Colonic mucosa (tissue), 4 donors: ENCODE measurements at regions of chr17 and their contacts with region 1.

Region 1: GRCh38 chr17:39485555-39485954 is 24.3 kb downstream of the CDK12 start:
- DNase-seq: no peak
- H3K4me3 ChIP-seq: no peak overlapping the region
- H3K27ac ChIP-seq: no peak overlapping the region
- H3K4me1 ChIP-seq: no peaks in the 10 kb centered on the region
- H3K27me3 ChIP-seq: no peaks in the 10 kb centered on the region
- CTCF ChIP-seq: no peak

Region 2: GRCh38 chr17:39306509-39307212 is 178.9 kb before region 1 on chr17:
- intact Hi-C with region 1: no loop called
- DNase-seq: no peak
- H3K4me3 ChIP-seq: no peak overlapping the region
- H3K27ac ChIP-seq: no peak overlapping the region
- H3K4me1 ChIP-seq: no peaks in the 10 kb centered on the region
- H3K27me3 ChIP-seq: no peaks in the 10 kb centered on the region
- CTCF ChIP-seq: no peak

Region 3: GRCh38 chr17:39429600-39429999 is 56.0 kb before region 1 on chr17:
- intact Hi-C with region 1: loop called (anchors 10 kb)
- DNase-seq: no peak
- H3K4me3 ChIP-seq: no peak overlapping the region
- H3K27ac ChIP-seq: no peak overlapping the region
- H3K4me1 ChIP-seq: no peaks in the 10 kb centered on the region
- H3K27me3 ChIP-seq: no peaks in the 10 kb centered on the region
- CTCF ChIP-seq: no peak